ENCODE measurements at regions of chr1 and their contacts with region 1.

Region 1: DNA sequence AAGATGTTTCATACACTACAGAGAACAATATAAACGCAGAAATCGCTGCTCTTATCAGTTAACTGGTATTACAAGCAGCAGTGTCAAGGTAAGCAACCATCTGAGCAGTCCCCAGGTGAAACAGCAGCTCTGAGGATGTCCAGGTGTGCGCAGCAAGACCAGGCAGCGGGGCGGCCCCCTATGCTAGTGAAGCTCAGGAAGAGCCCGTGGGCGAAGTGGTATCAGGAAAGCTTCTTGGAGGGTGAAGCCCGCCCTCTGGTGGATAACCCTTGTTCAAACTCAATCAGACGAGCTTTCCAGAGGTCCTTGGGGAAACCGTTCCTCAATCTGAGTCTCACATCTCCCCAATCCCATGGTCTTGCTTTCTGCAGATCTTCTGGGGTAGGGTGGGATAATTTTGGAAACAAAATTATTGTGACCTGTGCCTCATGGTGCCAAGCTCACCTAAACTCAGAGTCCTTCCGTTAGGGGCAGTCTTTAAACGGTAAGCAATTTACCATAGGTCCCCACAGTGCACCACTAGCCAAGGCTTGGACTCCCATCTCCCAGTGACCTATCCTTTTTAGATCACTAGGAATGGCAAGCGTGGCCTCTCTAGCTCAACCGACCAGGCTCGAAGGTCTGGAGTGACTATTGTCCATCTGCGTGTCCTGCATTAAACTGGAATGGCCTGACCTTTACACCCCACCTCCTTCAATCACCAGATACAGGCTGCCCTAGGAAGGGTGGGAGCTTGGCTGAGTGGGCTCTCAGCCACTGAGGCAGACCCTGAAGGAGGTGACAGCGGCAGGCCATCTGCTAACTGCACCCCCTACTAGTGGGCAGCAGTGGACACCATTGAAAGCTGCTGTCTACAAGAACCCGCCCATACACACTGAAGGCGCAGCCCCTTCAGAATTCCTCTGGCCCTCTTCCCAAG is 13.6 kb upstream of the FAM110D start:
- DNase-seq: peak; percentile 83
- ATAC-seq: peak; percentile 98
- H3K4me3 ChIP-seq: no peak overlapping the region
- H3K27ac ChIP-seq: no peak overlapping the region
- H3K4me1 ChIP-seq: peaks cover 7% of the 10 kb centered on the region
- H3K27me3 ChIP-seq: no peaks in the 10 kb centered on the region
- CTCF ChIP-seq: peak; percentile 80

Region 2: DNA sequence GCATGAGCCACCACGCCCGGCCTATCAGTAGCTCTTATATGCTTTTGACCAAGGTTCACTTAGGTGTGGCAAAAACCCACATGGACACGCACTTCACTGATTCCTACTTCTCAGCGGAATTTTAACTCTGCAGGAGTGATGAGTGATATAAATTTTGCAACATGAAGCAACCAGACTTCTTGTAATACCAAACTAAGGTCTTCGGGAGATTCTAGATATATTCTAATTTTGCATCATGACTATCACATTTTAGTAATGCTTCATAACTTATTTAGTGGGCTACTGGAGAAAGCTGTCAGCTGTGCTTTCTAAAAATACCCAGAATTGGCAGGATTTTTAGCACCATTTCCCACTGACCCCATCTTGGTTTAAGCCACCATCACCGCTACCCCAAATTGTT is 752.5 kb before region 1 on chr1:
- intact Hi-C with region 1: no loop called
- DNase-seq: no peak
- ATAC-seq: no peak
- H3K4me3 ChIP-seq: no peak overlapping the region
- H3K27ac ChIP-seq: no peak overlapping the region
- H3K4me1 ChIP-seq: no peaks in the 10 kb centered on the region
- H3K27me3 ChIP-seq: no peaks in the 10 kb centered on the region
- CTCF ChIP-seq: no peak

Region 3: GRCh38 chr1:25711555-25712298 is 433.6 kb before region 1 on chr1:
- intact Hi-C with region 1: no loop called
- DNase-seq: peak; percentile 77
- ATAC-seq: peak; percentile 88
- H3K4me3 ChIP-seq: no peak overlapping the region
- H3K27ac ChIP-seq: peak overlapping the region; percentile 13
- H3K4me1 ChIP-seq: peaks cover 16% of the 10 kb centered on the region
- H3K27me3 ChIP-seq: no peaks in the 10 kb centered on the region
- CTCF ChIP-seq: no peak

Region 4: GRCh38 chr1:25820247-25821119 is 324.8 kb before region 1 on chr1:
- intact Hi-C with region 1: no loop called
- DNase-seq: peak; percentile 80
- ATAC-seq: peak; percentile 69
- H3K4me3 ChIP-seq: peak overlapping the region; percentile 89
- H3K27ac ChIP-seq: peak overlapping the region; percentile 89
- H3K4me1 ChIP-seq: peaks cover 30% of the 10 kb centered on the region
- H3K27me3 ChIP-seq: no peaks in the 10 kb centered on the region
- CTCF ChIP-seq: no peak

Region 5: GRCh38 chr1:26109229-26110164 is 35.8 kb before region 1 on chr1:
- intact Hi-C with region 1: loop called (anchors 5 kb)
- DNase-seq: no peak
- ATAC-seq: no peak
- H3K4me3 ChIP-seq: no peak overlapping the region
- H3K27ac ChIP-seq: no peak overlapping the region
- H3K4me1 ChIP-seq: peaks cover 24% of the 10 kb centered on the region
- H3K27me3 ChIP-seq: no peaks in the 10 kb centered on the region
- CTCF ChIP-seq: no peak

Region 6: GRCh38 chr1:26237230-26237966 is 92.1 kb after region 1 on chr1:
- intact Hi-C with region 1: no loop called
- DNase-seq: no peak
- ATAC-seq: no peak
- H3K4me3 ChIP-seq: no peak overlapping the region
- H3K27ac ChIP-seq: no peak overlapping the region
- H3K4me1 ChIP-seq: peaks cover 8% of the 10 kb centered on the region
- H3K27me3 ChIP-seq: no peaks in the 10 kb centered on the region
- CTCF ChIP-seq: no peak

Measured in upper lobe of right lung (tissue), 1 donor.